ENCODE measurements at regions of chr6 and their contacts with region 1.

Region 1: GRCh38 chr6:41072676-41073623 is at the start of gene NFYA:
- H3K4me3 Mint-ChIP-seq: peak within 1 kb of the TSS; percentile 96
- H3K27ac Mint-ChIP-seq: peak within 1 kb of the TSS; percentile 99
- H3K4me1 Mint-ChIP-seq: peaks cover 37% of the 10 kb centered on the region
- H3K27me3 Mint-ChIP-seq: no peaks in the 10 kb centered on the region

Region 2: DNA sequence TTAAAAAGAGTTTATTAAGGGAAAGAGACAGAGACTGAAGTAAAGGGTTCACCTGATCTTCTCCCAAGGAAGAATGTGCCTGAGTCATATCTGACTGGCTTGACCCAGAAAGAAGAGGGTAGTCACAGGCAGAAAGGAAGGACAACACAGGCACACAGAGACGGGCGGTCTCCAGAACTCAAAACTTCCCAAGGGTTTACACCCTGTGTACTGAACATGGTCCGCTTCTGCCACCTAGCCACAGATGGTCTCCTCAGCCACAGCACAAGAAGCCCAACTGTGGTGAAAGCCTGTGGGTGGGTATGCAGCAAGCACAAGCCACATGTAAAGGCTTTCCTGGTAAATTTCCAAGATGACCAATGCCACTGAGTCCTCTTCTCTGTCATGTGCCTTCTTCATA is 51.1 kb before region 1 on chr6:
- intact Hi-C with region 1: no loop called
- H3K4me3 Mint-ChIP-seq: no peak overlapping the region
- H3K27ac Mint-ChIP-seq: no peak overlapping the region
- H3K4me1 Mint-ChIP-seq: peaks cover 10% of the 10 kb centered on the region
- H3K27me3 Mint-ChIP-seq: peaks cover 5% of the 10 kb centered on the region

Region 3: DNA sequence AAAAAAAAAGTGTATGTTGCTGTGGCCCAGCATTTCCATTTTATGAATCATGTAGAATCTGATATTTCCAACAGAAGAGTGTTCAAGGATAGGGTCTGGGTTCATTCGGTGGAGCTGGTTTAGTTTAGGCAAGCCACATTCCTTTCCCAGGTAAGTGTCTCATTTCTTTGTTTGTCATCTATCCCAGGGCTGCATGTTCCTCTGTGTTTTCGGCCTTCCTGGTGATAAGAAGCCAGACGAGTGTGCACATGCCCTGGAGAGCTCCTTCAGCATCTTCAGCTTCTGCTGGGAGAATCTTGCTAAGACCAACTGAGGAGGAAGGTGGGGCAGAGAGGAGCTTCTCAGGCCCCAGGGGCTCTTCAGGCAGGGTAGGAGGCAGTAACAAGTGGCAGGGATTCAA is 38.1 kb after region 1 on chr6:
- intact Hi-C with region 1: no loop called
- H3K4me3 Mint-ChIP-seq: no peak overlapping the region
- H3K27ac Mint-ChIP-seq: no peak overlapping the region
- H3K4me1 Mint-ChIP-seq: no peaks in the 10 kb centered on the region
- H3K27me3 Mint-ChIP-seq: no peaks in the 10 kb centered on the region

Region 4: DNA sequence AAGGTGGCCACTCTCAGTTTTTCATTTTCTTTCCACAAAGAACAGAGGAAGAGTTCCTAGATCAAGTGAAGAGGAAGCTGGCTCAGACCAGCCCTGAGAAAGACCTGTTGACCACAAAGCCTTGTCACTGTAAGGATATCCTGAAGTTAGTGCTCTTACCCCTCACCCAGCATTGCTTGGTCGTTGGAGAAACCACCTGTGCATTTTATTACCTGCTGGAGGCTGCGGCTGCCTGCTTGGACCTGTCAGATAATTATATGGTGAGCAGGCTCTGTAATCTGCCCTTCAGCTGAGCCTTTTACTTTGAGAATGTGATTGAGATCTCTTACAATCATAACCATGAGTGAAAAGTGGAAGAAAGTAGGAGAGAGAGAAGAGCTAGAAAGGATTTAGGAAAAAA is 59.3 kb after region 1 on chr6:
- intact Hi-C with region 1: no loop called
- H3K4me3 Mint-ChIP-seq: no peak overlapping the region
- H3K27ac Mint-ChIP-seq: no peak overlapping the region
- H3K4me1 Mint-ChIP-seq: peaks cover 6% of the 10 kb centered on the region
- H3K27me3 Mint-ChIP-seq: no peaks in the 10 kb centered on the region

Region 5: DNA sequence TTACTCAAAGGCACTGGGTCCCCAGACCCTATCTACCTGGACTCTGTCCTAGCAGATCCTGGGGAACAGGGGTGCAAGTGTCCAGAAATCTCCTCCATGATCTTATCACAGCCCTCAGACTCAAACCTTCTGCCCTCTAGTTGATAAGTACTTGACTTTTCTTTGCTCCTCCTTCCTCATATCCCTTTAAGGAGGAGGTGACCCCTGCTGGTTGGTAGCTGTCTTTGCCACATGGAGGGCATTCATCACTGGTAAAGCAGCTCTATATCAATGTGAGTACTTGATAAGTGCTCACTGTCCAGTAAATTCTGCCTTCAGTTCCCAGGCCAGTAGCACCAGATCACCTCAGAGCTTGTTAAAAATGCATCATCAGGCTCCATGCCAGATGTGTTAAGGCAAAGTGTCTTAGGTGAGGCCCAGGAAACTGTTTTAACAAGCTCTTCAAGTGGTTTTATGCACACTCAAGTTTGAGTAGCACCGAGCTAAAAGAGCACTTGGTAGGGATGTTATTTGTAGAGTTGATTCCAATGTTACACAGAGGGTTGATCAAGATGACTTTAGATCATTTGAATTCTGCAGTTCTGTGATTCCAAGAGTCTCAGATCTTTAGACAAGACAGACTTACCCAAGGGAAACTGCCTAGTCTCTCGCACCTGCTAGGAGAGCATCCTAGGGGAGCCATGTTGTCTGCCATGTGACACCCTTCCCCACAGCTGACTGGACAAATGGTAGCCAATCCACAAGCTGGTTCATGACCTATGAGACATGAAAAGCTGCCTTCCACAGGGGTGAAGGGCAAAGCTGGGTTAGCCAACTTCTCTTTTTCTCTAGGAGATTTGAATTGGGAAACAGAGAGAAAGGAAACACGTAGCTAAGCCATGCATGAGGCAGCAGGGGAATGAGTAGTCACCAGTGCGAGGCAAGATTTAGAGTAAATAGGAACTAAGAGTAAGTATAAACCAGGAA is 109.4 kb after region 1 on chr6:
- intact Hi-C with region 1: loop called (anchors 1 kb)
- H3K4me3 Mint-ChIP-seq: no peak overlapping the region
- H3K27ac Mint-ChIP-seq: peak overlapping the region; percentile 92
- H3K4me1 Mint-ChIP-seq: peaks cover 56% of the 10 kb centered on the region
- H3K27me3 Mint-ChIP-seq: peaks cover under 1% of the 10 kb centered on the region

Region 6: GRCh38 chr6:41268478-41268877 is 195.5 kb after region 1 on chr6:
- intact Hi-C with region 1: no loop called
- H3K4me3 Mint-ChIP-seq: no peak overlapping the region
- H3K27ac Mint-ChIP-seq: no peak overlapping the region
- H3K4me1 Mint-ChIP-seq: peaks cover 30% of the 10 kb centered on the region
- H3K27me3 Mint-ChIP-seq: no peaks in the 10 kb centered on the region

Region 7: GRCh38 chr6:41286544-41287346 is 213.8 kb after region 1 on chr6 and contains the start of gene TREM1:
- intact Hi-C with region 1: loop called (anchors 5 kb)
- H3K4me3 Mint-ChIP-seq: no peak within 1 kb of the TSS
- H3K27ac Mint-ChIP-seq: peak within 1 kb of the TSS; percentile 92
- H3K4me1 Mint-ChIP-seq: peaks cover 69% of the 10 kb centered on the region
- H3K27me3 Mint-ChIP-seq: no peaks in the 10 kb centered on the region

Measured in dendritic cell treated with granulocyte-macrophage colony-stimulating factor and Interleukin-4, amounts not matched to agents 40 ng/mL and 50 ng/mL, for 4 days (primary cell).